Activated CD4-positive, alpha-beta T cell treated with anti-CD3 and anti-CD28 coated beads, Interleukin-2, amount 10 ng/mL, durations not matched to agents 24 days and 14 days (primary cell): ENCODE measurements at regions of chr4 and their contacts with region 1.

Region 1: DNA sequence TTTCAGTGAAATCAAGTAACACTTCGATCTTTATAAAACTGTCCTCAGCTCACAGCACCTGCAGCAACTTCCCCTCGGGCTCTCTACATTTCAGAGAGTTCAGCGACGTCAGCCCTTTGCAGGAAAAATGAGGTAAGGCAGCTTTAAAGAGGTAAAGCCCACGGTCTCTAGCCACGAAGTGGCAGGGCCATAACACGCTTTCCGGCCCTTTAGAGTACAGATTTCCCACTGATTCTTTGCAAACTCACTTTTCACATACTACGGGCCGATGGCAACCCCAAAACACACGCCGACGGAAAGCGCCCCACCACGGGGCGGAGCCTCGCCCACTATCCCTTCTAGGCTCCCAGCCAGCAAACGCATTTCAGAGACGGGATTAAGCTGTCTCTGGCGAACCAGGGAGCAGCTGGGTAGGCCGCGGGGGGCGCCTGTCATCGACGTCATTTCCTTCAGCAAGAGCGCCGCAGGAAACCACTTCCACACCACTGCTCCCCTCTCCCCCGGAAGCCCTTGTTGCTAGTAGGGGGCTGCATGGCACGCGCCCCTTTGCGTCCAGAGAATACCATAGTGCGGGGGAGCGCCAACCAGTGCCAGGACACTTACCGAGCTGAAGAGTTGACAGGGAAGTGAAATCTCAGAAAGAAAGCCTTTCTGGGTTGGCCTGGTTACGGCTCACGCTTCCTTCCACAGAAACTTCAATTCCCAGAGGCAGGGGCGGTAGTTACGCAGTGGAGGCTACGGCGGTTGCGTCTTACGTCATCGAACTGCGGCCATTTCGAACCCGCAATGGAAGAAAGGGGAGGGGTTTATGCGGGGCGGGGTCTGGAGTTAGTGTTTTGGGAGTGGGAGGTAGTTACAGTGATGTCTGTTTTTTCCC is at the start of gene TRMT10A:
- DNase-seq: peak; percentile 97
- H3K4me3 Mint-ChIP-seq: peak within 1 kb of the TSS; percentile 97
- H3K27ac Mint-ChIP-seq: peak within 1 kb of the TSS; percentile 99
- H3K4me1 Mint-ChIP-seq: peaks cover 16% of the 10 kb centered on the region
- H3K27me3 Mint-ChIP-seq: peaks cover 13% of the 10 kb centered on the region
- total RNA-seq, gene TRMT10A: 7.4 and 8.6 TPM in 2 replicates

Region 2: DNA sequence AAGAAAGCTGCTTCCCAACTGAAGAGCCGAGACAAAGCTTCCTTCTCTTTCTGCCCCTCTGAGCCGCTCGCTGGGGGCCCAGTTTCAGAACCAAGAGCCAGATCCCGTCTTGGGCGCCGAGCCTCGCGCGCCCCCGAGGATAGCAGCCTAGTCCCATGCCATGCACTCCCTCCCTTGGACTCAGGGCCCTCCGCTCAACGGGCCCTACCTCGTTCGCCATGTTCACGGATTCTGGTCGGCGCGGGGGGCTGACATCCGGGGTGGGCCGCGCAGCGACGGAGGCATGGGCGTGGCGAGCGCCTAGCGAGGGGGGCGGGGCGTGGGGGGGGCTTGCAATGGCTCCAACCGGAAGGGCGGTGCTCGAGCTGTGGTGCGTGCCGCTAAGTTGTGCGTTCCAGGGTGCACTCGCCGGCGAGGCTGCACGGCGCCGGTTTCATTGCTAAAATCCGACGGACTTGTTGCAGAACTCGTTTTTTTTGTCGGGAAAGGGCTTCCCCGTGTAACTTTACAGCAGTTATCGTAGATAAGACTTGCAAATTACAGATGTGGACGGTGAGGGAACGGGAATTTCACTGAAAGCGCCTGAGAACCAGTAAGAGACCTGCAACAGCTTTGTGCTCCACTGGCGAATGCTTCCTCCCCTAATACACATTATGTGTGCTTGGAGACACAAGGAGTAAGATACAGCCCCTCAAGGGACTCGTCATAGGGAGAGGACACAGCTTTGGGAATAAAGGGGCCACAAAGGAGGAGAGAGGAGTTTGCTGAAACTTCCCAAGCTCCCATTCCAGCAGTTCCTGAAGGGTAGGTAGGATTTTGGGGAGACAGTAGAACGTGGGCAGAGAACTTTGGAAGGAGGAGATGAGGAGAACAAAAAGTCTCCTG is 474.8 kb before region 1 on chr4 and contains the start of gene ADH5:
- intact Hi-C with region 1: loop called (anchors 2 kb)
- DNase-seq: peak; percentile 95
- H3K4me3 Mint-ChIP-seq: peak within 1 kb of the TSS; percentile 90
- H3K27ac Mint-ChIP-seq: peak within 1 kb of the TSS; percentile 96
- H3K4me1 Mint-ChIP-seq: peaks cover 35% of the 10 kb centered on the region
- H3K27me3 Mint-ChIP-seq: peaks cover 1% of the 10 kb centered on the region
- total RNA-seq, gene ADH5: 82.6 and 85.3 TPM in 2 replicates

Region 3: GRCh38 chr4:99529228-99529627 is 34.3 kb before region 1 on chr4:
- intact Hi-C with region 1: no loop called
- DNase-seq: no peak
- H3K4me3 Mint-ChIP-seq: no peak overlapping the region
- H3K27ac Mint-ChIP-seq: no peak overlapping the region
- H3K4me1 Mint-ChIP-seq: no peaks in the 10 kb centered on the region
- H3K27me3 Mint-ChIP-seq: peaks cover 15% of the 10 kb centered on the region

Region 4: GRCh38 chr4:99808260-99808857 is 244.8 kb after region 1 on chr4:
- intact Hi-C with region 1: loop called (anchors 1 kb)
- DNase-seq: peak; percentile 92
- H3K4me3 Mint-ChIP-seq: no peak overlapping the region
- H3K27ac Mint-ChIP-seq: no peak overlapping the region
- H3K4me1 Mint-ChIP-seq: peaks cover 16% of the 10 kb centered on the region
- H3K27me3 Mint-ChIP-seq: peaks cover 13% of the 10 kb centered on the region

Region 5: DNA sequence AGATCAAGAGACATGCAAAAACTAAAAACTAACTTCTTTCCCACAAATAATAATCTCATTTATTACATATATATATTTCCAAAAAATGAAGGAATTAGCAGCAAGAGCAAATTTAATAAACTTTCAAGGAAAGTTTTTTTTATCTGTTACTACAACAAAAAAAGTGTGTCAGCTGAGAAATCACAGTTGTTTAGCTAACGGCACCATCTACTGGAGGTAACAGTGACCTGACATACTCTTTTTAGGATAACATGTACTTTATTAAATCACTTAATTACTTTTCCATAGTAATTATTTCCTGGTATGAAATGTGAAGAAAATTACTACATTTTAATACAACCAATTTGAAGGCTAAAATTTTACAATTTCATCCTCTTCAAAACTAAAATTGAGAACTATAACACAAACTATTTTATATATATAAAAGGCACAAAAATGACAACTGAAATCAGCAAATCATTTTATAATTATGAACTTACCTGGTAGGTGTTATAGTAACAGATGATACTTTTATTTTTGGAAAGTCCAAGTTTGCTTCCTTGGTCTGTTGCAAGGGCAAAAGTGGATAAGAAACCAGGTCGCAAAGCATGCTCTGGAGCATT is 321.6 kb after region 1 on chr4:
- intact Hi-C with region 1: loop called (anchors 1 kb)
- DNase-seq: peak; percentile 83
- H3K4me3 Mint-ChIP-seq: no peak overlapping the region
- H3K27ac Mint-ChIP-seq: no peak overlapping the region
- H3K4me1 Mint-ChIP-seq: peaks cover 4% of the 10 kb centered on the region
- H3K27me3 Mint-ChIP-seq: no peaks in the 10 kb centered on the region

Region 6: DNA sequence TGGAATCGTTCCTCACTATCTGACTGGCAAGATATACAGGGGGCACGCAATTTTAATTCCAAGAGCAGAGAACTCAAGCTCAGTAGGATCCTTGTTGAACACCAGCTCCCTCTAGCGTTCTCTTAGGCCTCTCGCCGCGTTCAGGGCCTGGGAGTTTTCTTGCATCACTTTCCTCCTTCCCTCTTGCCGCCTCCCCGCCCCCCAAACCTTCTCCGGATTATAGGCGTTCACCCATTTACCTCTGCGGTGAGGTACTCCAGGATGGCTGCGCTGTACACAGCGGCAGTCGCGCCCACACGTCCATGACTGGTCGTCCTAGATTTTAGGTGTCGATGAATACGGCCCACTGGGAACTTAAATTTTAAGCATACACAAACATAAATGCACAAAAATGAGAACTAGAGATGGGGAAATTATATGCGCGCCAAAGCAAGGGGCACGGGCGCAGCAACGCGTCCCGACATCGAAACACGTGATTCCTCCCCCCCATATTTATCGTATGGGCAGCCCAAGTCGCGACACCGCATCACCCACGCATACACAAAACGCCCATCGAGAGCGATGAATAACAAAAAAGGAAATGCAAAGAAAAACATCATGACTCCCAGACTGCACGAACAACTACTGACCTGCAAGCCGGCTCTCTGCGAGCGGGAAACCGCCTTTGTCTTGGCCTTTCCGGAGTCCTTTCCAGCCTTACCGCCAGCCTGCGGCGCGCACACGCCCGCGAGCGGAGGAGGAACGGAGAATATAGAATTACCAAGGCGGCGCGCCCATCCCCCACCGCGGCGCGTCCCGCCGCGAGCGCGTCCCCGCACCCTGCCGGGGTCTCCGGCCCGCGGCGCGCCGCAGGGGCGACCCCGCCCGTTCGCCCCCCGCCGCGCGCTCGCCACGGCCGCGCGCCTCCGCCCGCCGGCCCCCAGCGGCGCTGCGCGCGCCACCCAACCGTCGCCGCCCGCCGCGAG is 385.8 kb after region 1 on chr4:
- intact Hi-C with region 1: loop called (anchors 1 kb)
- DNase-seq: peak; percentile 96
- H3K4me3 Mint-ChIP-seq: no peak overlapping the region
- H3K27ac Mint-ChIP-seq: no peak overlapping the region
- H3K4me1 Mint-ChIP-seq: peaks cover 26% of the 10 kb centered on the region
- H3K27me3 Mint-ChIP-seq: no peaks in the 10 kb centered on the region